Adrenal gland (tissue), 19 donors: ENCODE measurements at regions of chr17 and their contacts with region 1.

Region 1: GRCh38 chr17:79045842-79046196 is 21.9 kb downstream of the C1QTNF1 start:
- DNase-seq: peak; percentile 60 to 91 (median 79)
- H3K4me3 ChIP-seq: no peak overlapping the region
- H3K27ac ChIP-seq: no peak overlapping the region
- H3K4me1 ChIP-seq: peaks cover 3 to 6% of the 10 kb centered on the region in 2 donors
- H3K27me3 ChIP-seq: no peaks in the 10 kb centered on the region
- CTCF ChIP-seq: peak; percentile 83 to 92 (median 88)
- POLR2A ChIP-seq: no peak

Region 2: GRCh38 chr17:78993241-78993956 is 52.4 kb before region 1 on chr17:
- intact Hi-C with region 1: loop called in 1 of 2 experiments (anchors 5 kb)
- DNase-seq: peak; percentile 41 to 83 (median 64)
- H3K4me3 ChIP-seq: no peak overlapping the region
- H3K27ac ChIP-seq: peak overlapping the region in 2 of 5 donors; percentile 21 to 23
- H3K4me1 ChIP-seq: peaks cover 17 to 39% of the 10 kb centered on the region in 2 donors
- H3K27me3 ChIP-seq: no peaks in the 10 kb centered on the region
- CTCF ChIP-seq: peak; percentile 65 to 80 (median 71)
- POLR2A ChIP-seq: no peak

Region 3: GRCh38 chr17:79082311-79083190 is 36.7 kb after region 1 on chr17:
- intact Hi-C with region 1: loop called (anchors 2 to 5 kb)
- DNase-seq: peak in 6 of 7 donors; percentile 48 to 88 (median 56)
- H3K4me3 ChIP-seq: no peak overlapping the region
- H3K27ac ChIP-seq: peak overlapping the region in 1 of 5 donors; percentile 23
- H3K4me1 ChIP-seq: no peaks in the 10 kb centered on the region
- H3K27me3 ChIP-seq: no peaks in the 10 kb centered on the region
- CTCF ChIP-seq: peak; percentile 67 to 82 (median 76)
- POLR2A ChIP-seq: no peak